ENCODE measurements at regions of chr21 and their contacts with region 1.

Region 1: GRCh38 chr21:35840197-35840799 is 220.0 kb downstream of the SETD4 start:
- DNase-seq: peak; percentile 91
- ATAC-seq: peak; percentile 85
- H3K4me3 ChIP-seq: no peak overlapping the region
- H3K27ac ChIP-seq: no peak overlapping the region
- H3K4me1 ChIP-seq: no peaks in the 10 kb centered on the region
- H3K27me3 ChIP-seq: no peaks in the 10 kb centered on the region
- CTCF ChIP-seq: peak; percentile 94
- POLR2A ChIP-seq: 0 out of 2 replicates have a peak, but pooled peaks have one; percentile 29
- RAD21 ChIP-seq: peak; percentile 90

Region 2: GRCh38 chr21:34693192-34693810 is 1147.0 kb before region 1 on chr21:
- CTCF ChIA-PET with region 1: no interaction called
- POLR2A ChIA-PET with region 1: no interaction called
- dilution Hi-C with region 1: no loop called
- in situ Hi-C with region 1: no loop called
- intact Hi-C with region 1: loop called (anchors 1 kb)
- DNase-seq: peak; percentile 74
- ATAC-seq: peak; percentile 80
- H3K4me3 ChIP-seq: no peak overlapping the region
- H3K27ac ChIP-seq: no peak overlapping the region
- H3K4me1 ChIP-seq: no peaks in the 10 kb centered on the region
- H3K27me3 ChIP-seq: peaks cover 36% of the 10 kb centered on the region
- CTCF ChIP-seq: peak; percentile 84
- POLR2A ChIP-seq: no peak
- RAD21 ChIP-seq: peak; percentile 89

Region 3: GRCh38 chr21:35400233-35400957 is 439.9 kb before region 1 on chr21:
- CTCF ChIA-PET with region 1: no interaction called
- POLR2A ChIA-PET with region 1: no interaction called
- dilution Hi-C with region 1: no loop called
- in situ Hi-C with region 1: no loop called
- intact Hi-C with region 1: loop called (anchors 5 kb)
- DNase-seq: peak; percentile 67
- ATAC-seq: peak; percentile 53; the same call in 1 of the 2 replicates
- H3K4me3 ChIP-seq: no peak overlapping the region
- H3K27ac ChIP-seq: no peak overlapping the region
- H3K4me1 ChIP-seq: peaks cover 8% of the 10 kb centered on the region
- H3K27me3 ChIP-seq: no peaks in the 10 kb centered on the region
- CTCF ChIP-seq: peak; percentile 61
- POLR2A ChIP-seq: 0 out of 2 replicates have a peak, but pooled peaks have one; percentile 25
- RAD21 ChIP-seq: peak; percentile 78

Region 4: DNA sequence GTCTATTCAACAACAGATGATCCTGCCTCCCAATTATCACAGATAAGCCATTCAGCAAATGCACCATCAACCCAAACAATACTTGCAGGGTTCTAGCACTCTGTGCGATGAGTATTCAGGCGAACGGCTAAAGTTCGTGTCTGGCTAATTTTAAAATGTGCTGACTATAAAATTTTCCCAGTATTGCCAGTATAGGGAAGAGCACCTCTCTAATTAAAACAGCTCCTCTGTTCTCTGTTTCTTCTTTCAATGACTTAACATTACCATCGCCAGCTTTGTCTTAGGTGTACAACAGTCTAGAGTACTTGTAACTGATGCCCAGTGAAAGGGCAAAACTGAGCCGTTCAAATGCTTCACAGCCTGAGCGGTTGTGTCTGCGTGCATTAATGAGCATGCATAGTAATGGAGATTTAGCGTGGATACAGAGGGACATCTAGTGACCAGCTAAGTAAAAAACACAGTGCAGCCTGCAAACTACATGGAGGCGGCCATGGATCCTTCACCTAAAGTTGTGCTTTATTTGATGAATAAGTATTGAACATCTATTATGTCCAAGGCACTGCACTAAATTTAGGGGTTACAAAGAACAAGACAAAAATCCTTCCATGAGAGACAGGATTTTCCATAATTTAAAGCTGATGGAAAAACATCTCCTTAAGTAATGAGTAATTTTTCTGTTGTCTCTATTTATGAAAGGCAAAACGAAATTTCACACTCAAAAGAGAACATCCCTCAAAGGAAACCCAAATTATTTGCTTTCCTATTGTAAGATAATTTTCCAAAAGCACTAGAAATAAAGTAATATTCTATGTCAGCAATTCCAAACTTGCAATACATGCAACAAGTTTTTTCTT is 100.0 kb after region 1 on chr21:
- CTCF ChIA-PET with region 1: interaction called, 3 read pairs
- POLR2A ChIA-PET with region 1: no interaction called
- dilution Hi-C with region 1: no loop called
- in situ Hi-C with region 1: no loop called
- intact Hi-C with region 1: loop called (anchors 5 kb)
- DNase-seq: peak; percentile 81
- ATAC-seq: peak; percentile 100
- H3K4me3 ChIP-seq: no peak overlapping the region
- H3K27ac ChIP-seq: no peak overlapping the region
- H3K4me1 ChIP-seq: no peaks in the 10 kb centered on the region
- H3K27me3 ChIP-seq: no peaks in the 10 kb centered on the region; the same call in 1 of the 2 replicates
- CTCF ChIP-seq: peak; percentile 88
- POLR2A ChIP-seq: no peak
- RAD21 ChIP-seq: peak; percentile 93

Region 5: DNA sequence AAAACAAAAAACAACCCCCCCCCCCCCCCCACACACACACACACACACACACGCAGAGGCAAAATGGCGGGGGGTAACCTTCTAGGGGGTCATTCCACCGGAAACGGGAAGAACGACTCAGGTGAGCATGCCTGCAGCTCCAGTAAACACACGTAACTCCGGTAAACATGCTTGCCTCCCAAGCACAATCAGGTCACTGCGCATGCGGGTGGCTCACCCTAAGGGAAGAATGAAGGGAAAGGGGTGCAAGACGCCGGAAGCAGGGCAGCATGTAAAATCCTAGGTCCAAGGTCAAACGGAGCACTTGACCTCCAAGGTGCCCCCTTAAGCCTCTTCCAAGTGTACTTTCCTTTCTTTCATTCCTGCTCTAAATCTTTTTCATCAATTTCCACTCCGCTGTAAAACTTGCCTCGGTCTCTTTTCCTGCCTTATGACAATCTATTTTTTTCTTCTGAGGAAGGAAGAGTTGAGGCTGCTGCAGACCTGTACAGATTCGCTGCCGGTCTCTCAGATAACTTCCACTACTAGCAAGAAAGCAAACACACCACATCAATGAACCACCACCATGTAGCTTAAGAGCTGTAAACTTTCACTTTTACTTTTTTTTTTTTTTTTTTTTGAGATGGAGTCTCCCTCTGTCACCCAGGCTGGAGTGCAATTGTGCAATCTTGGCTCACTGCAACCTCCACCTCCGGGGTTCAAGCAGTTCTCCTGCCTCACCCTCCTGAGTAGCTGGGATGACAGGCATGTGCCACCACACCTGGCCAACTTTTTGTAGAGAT is 273.5 kb after region 1 on chr21:
- CTCF ChIA-PET with region 1: no interaction called
- POLR2A ChIA-PET with region 1: no interaction called
- dilution Hi-C with region 1: no loop called
- in situ Hi-C with region 1: no loop called
- intact Hi-C with region 1: loop called (anchors 5 kb)
- DNase-seq: no peak
- ATAC-seq: no peak
- H3K4me3 ChIP-seq: no peak overlapping the region
- H3K27ac ChIP-seq: no peak overlapping the region
- H3K4me1 ChIP-seq: 0 out of 2 replicates have a peak, but pooled peaks cover 2% of the 10 kb centered on the region
- H3K27me3 ChIP-seq: peaks cover 3% of the 10 kb centered on the region
- CTCF ChIP-seq: no peak
- POLR2A ChIP-seq: no peak
- RAD21 ChIP-seq: no peak